ENCODE measurements at regions of chr7 and their contacts with region 1.

Region 1: DNA sequence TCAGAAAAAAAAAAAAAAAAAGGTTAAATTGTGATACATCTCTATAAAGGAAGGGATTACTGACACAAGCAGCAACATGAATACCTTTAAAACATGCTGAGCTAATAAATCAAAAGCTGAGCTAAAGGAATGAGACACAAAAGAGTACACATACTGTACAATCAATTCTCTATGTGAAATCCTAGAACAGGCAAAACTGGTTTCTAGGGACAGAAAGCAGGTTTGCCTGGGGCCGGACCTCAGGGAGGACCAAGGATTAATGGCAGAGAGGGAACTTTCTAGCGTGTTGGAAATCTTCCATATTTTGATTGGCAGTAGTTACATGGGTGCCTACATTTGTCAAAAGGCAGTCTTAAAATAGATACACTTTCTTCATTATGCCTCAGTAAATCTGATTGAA is 52.5 kb downstream of the KLRG2 start:
- DNase-seq: no peak
- H3K4me3 ChIP-seq: no peak overlapping the region
- H3K4me3 Mint-ChIP-seq: no peak overlapping the region
- H3K27ac ChIP-seq: no peak overlapping the region
- H3K27ac Mint-ChIP-seq: peak overlapping the region in 1 of 7 donors; percentile 16
- H3K4me1 ChIP-seq: peaks cover 0 to 3% of the 10 kb centered on the region in 2 donors
- H3K4me1 Mint-ChIP-seq: peaks cover 13% of the 10 kb centered on the region
- H3K27me3 ChIP-seq: no peaks in the 10 kb centered on the region
- H3K27me3 Mint-ChIP-seq: no peaks in the 10 kb centered on the region
- CTCF ChIP-seq: no peak

Region 2: GRCh38 chr7:139471740-139472353 is 40.8 kb after region 1 on chr7:
- intact Hi-C with region 1: no loop called
- DNase-seq: no peak
- H3K4me3 ChIP-seq: no peak overlapping the region
- H3K4me3 Mint-ChIP-seq: no peak overlapping the region
- H3K27ac ChIP-seq: no peak overlapping the region
- H3K27ac Mint-ChIP-seq: no peak overlapping the region
- H3K4me1 ChIP-seq: no peaks in the 10 kb centered on the region
- H3K4me1 Mint-ChIP-seq: no peaks in the 10 kb centered on the region
- H3K27me3 ChIP-seq: no peaks in the 10 kb centered on the region
- H3K27me3 Mint-ChIP-seq: peaks cover 0 to 7% (median 0%) of the 10 kb centered on the region in 3 donors
- CTCF ChIP-seq: no peak

Region 3: DNA sequence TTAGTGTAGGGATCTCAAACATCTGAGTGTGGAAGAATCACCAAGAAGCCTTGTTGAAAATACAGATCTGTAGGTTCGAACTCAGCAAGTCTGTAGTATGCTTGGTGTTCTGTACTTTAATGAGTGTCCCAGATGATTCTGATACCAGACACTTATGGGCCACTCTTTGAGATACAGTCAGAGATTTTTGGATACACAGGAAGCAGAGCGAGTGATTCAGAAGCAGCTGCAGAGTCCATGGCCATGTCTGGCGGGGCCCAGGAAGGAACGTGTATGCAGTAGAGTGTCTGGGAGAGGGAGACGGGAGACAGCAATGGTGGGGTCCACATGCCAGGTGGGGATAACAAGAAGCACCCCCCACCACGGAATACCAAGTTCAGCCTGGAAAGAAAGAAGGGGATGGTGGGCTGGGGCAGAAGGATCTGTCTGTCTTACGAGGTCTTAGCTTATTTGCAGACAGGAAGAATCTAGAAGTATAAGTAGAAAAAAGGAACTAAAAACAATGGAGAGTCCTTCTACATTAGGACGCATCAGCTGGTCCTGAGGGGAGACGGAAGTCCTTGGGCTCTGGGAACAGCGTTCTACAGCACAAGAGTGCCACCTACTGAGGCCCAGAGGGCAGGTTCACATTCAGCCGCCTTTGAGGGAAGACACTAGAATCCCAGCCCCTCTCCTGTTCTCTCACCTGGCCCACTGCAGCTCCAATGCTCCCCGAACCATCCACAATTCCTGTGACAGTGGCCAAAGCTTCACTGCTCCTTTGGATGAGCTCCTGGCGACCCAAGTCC is 911.9 kb after region 1 on chr7:
- intact Hi-C with region 1: loop called in 1 of 2 experiments (anchors 10 kb)
- DNase-seq: peak; percentile 80 to 88 (median 88)
- H3K4me3 ChIP-seq: no peak overlapping the region
- H3K4me3 Mint-ChIP-seq: peak overlapping the region; percentile 59 to 61
- H3K27ac ChIP-seq: peak overlapping the region in 1 of 2 donors; percentile 69
- H3K27ac Mint-ChIP-seq: peak overlapping the region; percentile 66 to 92 (median 85)
- H3K4me1 ChIP-seq: peaks cover 6% of the 10 kb centered on the region in 2 donors
- H3K4me1 Mint-ChIP-seq: peaks cover 13% of the 10 kb centered on the region
- H3K27me3 ChIP-seq: no peaks in the 10 kb centered on the region
- H3K27me3 Mint-ChIP-seq: peaks cover 0 to 2% (median 0%) of the 10 kb centered on the region in 3 donors
- CTCF ChIP-seq: peak; percentile 88

Measured in CD14-positive monocyte (primary cell).